Testis (tissue), 5 donors: ENCODE measurements at regions of chr16 and their contacts with region 1.

Region 1: DNA sequence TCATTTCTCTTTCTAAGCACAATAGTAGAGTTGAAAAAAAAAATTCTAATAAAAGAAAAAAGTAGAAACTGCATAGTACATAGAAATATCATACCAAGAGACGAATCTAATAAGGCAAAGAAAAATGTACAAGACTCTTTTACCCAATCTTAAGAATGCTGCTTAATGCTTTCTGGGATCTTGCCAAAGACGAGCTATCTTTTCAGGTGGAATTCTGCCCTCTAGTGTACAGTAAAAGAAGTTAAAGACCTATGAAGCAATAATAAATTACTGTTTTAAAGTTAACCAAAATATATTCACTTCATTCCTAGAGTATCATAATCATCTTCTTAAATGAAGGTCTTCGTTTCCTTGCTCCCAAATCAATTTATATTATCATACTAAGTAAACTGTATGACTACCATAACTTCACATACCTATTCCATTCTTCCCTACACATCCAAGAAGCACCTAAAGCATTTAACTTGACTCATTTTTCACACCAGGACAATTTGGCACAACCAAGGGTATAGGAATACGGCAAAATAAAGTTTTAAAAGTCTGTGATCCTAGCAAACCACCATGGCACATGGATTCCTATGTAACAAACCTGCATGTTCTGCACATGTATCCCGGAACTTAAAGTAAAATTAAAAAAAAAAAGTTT is 47.7 kb downstream of the CFDP1 start:
- DNase-seq: no peak
- H3K4me3 ChIP-seq: no peak overlapping the region
- H3K27ac ChIP-seq: no peak overlapping the region
- H3K4me1 ChIP-seq: peaks cover 7% of the 10 kb centered on the region
- H3K27me3 ChIP-seq: no peaks in the 10 kb centered on the region
- CTCF ChIP-seq: peak; percentile 70 to 76 (median 72)
- POLR2A ChIP-seq: no peak

Region 2: GRCh38 chr16:75238132-75238852 is 147.3 kb before region 1 on chr16:
- intact Hi-C with region 1: loop called (anchors 10 kb)
- DNase-seq: peak; percentile 94
- H3K4me3 ChIP-seq: no peak overlapping the region
- H3K27ac ChIP-seq: peak overlapping the region; percentile 71 to 79
- H3K4me1 ChIP-seq: peaks cover 70% of the 10 kb centered on the region
- H3K27me3 ChIP-seq: no peaks in the 10 kb centered on the region
- CTCF ChIP-seq: peak in 1 of 3 experiments; percentile 11
- POLR2A ChIP-seq: no peak

Region 3: GRCh38 chr16:75764154-75764768 is 378.6 kb after region 1 on chr16:
- intact Hi-C with region 1: no loop called
- DNase-seq: peak; percentile 73
- H3K4me3 ChIP-seq: no peak overlapping the region
- H3K27ac ChIP-seq: no peak overlapping the region
- H3K4me1 ChIP-seq: no peaks in the 10 kb centered on the region
- H3K27me3 ChIP-seq: no peaks in the 10 kb centered on the region
- CTCF ChIP-seq: peak in 2 of 3 experiments; percentile 70 to 77
- POLR2A ChIP-seq: no peak